Endothelial cell of umbilical vein (primary cell): ENCODE measurements at regions of chr2 and their contacts with region 1.

Region 1: DNA sequence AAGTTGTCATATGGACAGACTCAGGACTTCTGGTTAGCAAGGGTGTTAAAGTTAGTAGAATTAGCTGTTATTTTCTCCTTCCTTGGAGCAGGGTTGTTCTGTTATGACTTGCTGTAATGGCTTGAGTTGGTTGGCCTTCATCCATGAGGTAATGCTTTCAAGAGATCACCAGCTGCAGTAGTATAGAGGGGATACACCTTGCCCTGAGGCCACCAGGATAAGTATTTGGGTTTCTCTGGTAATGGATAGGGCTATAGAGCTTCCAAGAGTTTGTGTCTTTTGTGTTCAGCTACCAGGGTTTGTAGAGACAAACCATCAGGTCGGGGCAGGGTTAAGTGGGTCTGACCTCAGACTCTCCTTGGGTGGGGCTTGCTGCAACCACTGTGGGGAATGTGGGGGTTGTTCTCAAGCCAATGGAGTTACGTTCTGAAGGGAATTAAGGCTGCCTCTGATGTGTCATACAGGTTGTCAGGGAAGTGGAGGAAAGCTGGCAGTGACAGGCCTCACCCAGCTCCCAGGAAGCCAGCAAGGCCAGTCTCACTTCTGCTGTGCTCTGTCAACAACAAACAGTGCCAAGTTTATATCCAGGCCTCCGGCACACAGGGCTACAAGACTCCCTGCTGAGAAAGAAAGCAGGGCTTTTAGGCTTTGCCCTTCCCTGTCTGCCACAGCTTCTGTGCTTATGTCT is 356.6 kb downstream of the SPAG16 start:
- DNase-seq: no peak
- H3K4me3 ChIP-seq: no peak overlapping the region
- H3K27ac ChIP-seq: no peak overlapping the region
- H3K4me1 ChIP-seq: no peaks in the 10 kb centered on the region
- H3K27me3 ChIP-seq: no peaks in the 10 kb centered on the region
- CTCF ChIP-seq: no peak
- POLR2A ChIP-seq: no peak

Region 2: DNA sequence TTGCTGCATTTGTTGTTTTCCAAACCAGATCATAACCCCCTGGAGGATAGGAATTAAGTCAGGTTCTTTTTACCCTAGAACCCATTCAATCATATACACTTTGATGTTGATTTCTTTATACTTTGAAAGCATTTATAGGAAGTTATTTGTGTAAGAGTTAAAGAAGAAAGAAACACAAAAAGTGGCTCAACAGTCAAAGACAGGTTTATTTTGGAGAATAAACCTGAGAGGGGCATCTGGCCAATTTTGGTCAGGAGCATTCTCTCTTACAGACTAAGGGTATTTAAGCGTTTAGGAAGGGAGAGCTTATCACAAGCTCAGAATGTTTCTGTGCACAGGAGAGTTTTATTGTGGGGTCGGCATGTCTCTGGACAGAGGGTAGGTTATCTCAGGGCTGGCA is 41.4 kb after region 1 on chr2:
- CTCF ChIA-PET with region 1: no interaction called
- POLR2A ChIA-PET with region 1: no interaction called
- dilution Hi-C with region 1: no loop called
- intact Hi-C with region 1: loop called (anchors 1 kb)
- DNase-seq: no peak
- H3K4me3 ChIP-seq: no peak overlapping the region
- H3K27ac ChIP-seq: no peak overlapping the region
- H3K4me1 ChIP-seq: no peaks in the 10 kb centered on the region
- H3K27me3 ChIP-seq: no peaks in the 10 kb centered on the region
- CTCF ChIP-seq: no peak
- POLR2A ChIP-seq: no peak